Ovary (tissue), 10 donors: ENCODE measurements at regions of chr3 and their contacts with region 1.

Region 1: GRCh38 chr3:94062431-94063404 is at the starts of genes DHFR2 and NSUN3:
- DNase-seq: peak; percentile 84 to 89 (median 86)
- H3K4me3 ChIP-seq: peak within 1 kb of the TSS; percentile 82
- H3K27ac ChIP-seq: peak within 1 kb of the TSS; percentile 84 to 92
- H3K4me1 ChIP-seq: peaks cover 1% of the 10 kb centered on the region
- H3K27me3 ChIP-seq: no peaks in the 10 kb centered on the region
- CTCF ChIP-seq: no peak
- EP300 ChIP-seq: no peak
- POLR2A ChIP-seq: peak; percentile 53
- total RNA-seq, gene DHFR2: 4.6 to 13.9 (median 8.7) TPM
- total RNA-seq, gene NSUN3: 9.9 to 14.9 (median 12.6) TPM

Region 2: GRCh38 chr3:94004301-94004910 is 58.3 kb before region 1 on chr3:
- intact Hi-C with region 1: loop called in 1 of 4 experiments (anchors 10 kb)
- DNase-seq: no peak
- H3K4me3 ChIP-seq: peak overlapping the region; percentile 6
- H3K27ac ChIP-seq: no peak overlapping the region
- H3K4me1 ChIP-seq: peaks cover 1% of the 10 kb centered on the region
- H3K27me3 ChIP-seq: no peaks in the 10 kb centered on the region
- CTCF ChIP-seq: peak; percentile 38 to 58 (median 56)
- EP300 ChIP-seq: no peak
- POLR2A ChIP-seq: no peak

Region 3: DNA sequence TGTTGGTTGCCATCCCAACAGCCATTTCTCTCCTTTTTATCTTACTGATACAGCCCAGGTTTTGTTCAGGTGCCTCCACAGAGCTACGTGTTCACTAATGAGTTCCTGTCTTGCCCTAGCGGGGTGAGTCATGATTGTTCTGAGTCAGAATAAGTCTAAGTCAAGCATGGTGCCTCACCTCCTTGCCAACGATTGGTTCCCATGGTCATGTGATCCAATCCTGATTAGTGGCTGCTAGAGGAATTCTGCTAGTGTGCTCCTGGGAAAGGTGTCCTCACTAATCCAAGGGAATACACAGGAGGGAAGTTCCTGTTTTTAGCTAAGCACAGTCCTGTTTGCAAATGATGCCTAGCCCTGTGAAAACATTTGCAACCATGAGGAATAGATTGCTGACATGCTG is 100.0 kb after region 1 on chr3:
- intact Hi-C with region 1: no loop called
- DNase-seq: no peak
- H3K4me3 ChIP-seq: no peak overlapping the region
- H3K27ac ChIP-seq: no peak overlapping the region
- H3K4me1 ChIP-seq: peaks cover 2% of the 10 kb centered on the region
- H3K27me3 ChIP-seq: no peaks in the 10 kb centered on the region
- CTCF ChIP-seq: no peak
- EP300 ChIP-seq: no peak
- POLR2A ChIP-seq: no peak